ENCODE measurements at regions of chr6 and their contacts with region 1.

Region 1: GRCh38 chr6:31079656-31080261 is 32.6 kb downstream of the C6orf15 start:
- DNase-seq: peak; percentile 77
- H3K4me3 Mint-ChIP-seq: peak overlapping the region; percentile 43
- H3K27ac Mint-ChIP-seq: no peak overlapping the region
- H3K4me1 Mint-ChIP-seq: peaks cover 9% of the 10 kb centered on the region
- H3K27me3 Mint-ChIP-seq: peaks cover 2% of the 10 kb centered on the region

Region 2: DNA sequence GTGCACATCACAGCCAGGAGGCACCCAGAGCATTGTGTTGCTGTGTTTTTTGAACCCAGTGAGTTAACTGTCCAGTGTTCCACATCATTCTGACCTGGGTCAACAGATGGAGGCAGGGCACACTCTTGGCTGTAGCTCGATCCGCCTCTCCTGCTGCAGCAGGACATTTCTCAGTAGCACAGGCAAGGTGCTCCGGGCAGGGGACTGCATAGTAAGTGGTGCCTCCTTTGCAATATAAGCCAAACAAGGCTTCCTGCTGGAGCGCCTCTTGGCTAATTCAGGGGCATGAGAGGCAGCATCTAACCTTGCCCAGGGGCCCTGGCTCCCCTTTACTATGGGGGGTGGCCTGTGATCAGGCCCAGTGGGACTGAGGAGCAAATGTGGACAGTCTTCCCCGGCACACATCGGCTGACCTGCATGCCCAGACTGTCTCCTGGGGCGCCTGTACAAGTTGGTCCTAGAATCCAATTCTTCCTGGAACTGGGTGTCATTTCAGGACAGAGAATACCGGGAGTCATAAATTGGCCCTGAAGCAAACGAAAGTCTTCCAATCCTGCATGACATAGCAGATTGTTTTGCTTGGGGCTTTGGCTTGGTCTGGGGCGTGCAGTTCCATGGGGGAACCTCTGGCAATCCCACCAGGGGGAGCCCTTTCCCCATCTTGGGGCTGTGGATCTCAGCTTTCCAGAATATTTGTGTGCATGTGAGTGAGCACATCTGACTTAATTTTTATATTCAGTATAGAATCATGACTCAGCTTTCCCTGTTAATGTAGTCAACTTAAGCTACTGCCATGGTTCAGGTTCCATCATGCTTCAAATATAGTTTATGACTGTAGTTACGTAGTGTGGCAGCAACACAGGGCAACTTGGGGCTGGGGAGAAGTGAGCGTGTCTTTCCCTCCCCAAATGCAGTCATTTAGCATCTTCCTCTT is 251.5 kb before region 1 on chr6:
- CTCF ChIA-PET with region 1: interaction called, 46 read pairs
- POLR2A ChIA-PET with region 1: no interaction called
- intact Hi-C with region 1: no loop called
- DNase-seq: peak; percentile 90
- H3K4me3 Mint-ChIP-seq: peak overlapping the region; percentile 83
- H3K27ac Mint-ChIP-seq: peak overlapping the region; percentile 96
- H3K4me1 Mint-ChIP-seq: peaks cover 65% of the 10 kb centered on the region
- H3K27me3 Mint-ChIP-seq: no peaks in the 10 kb centered on the region

Region 3: GRCh38 chr6:30914076-30914853 is 165.5 kb before region 1 on chr6 and contains the start of gene VARS2:
- CTCF ChIA-PET with region 1: interaction called, 82 read pairs
- POLR2A ChIA-PET with region 1: interaction called, 7 read pairs
- intact Hi-C with region 1: loop called (anchors 1 kb)
- DNase-seq: peak; percentile 93
- H3K4me3 Mint-ChIP-seq: peak within 1 kb of the TSS; percentile 94
- H3K27ac Mint-ChIP-seq: peak within 1 kb of the TSS; percentile 82
- H3K4me1 Mint-ChIP-seq: peaks cover 29% of the 10 kb centered on the region
- H3K27me3 Mint-ChIP-seq: no peaks in the 10 kb centered on the region
- total RNA-seq, gene VARS2: 56.9 to 68.9 TPM

Region 4: GRCh38 chr6:31060145-31060544 is 19.6 kb before region 1 on chr6:
- CTCF ChIA-PET with region 1: interaction called, 17 read pairs
- POLR2A ChIA-PET with region 1: no interaction called
- intact Hi-C with region 1: no loop called
- DNase-seq: no peak
- H3K4me3 Mint-ChIP-seq: no peak overlapping the region
- H3K27ac Mint-ChIP-seq: no peak overlapping the region
- H3K4me1 Mint-ChIP-seq: peaks cover 9% of the 10 kb centered on the region
- H3K27me3 Mint-ChIP-seq: no peaks in the 10 kb centered on the region

Region 5: GRCh38 chr6:31094389-31094881 is 14.7 kb after region 1 on chr6:
- CTCF ChIA-PET with region 1: interaction called, 30 read pairs
- POLR2A ChIA-PET with region 1: no interaction called
- intact Hi-C with region 1: no loop called
- DNase-seq: peak; percentile 60
- H3K4me3 Mint-ChIP-seq: no peak overlapping the region
- H3K27ac Mint-ChIP-seq: peak overlapping the region; percentile 81
- H3K4me1 Mint-ChIP-seq: peaks cover 41% of the 10 kb centered on the region
- H3K27me3 Mint-ChIP-seq: no peaks in the 10 kb centered on the region

Region 6: DNA sequence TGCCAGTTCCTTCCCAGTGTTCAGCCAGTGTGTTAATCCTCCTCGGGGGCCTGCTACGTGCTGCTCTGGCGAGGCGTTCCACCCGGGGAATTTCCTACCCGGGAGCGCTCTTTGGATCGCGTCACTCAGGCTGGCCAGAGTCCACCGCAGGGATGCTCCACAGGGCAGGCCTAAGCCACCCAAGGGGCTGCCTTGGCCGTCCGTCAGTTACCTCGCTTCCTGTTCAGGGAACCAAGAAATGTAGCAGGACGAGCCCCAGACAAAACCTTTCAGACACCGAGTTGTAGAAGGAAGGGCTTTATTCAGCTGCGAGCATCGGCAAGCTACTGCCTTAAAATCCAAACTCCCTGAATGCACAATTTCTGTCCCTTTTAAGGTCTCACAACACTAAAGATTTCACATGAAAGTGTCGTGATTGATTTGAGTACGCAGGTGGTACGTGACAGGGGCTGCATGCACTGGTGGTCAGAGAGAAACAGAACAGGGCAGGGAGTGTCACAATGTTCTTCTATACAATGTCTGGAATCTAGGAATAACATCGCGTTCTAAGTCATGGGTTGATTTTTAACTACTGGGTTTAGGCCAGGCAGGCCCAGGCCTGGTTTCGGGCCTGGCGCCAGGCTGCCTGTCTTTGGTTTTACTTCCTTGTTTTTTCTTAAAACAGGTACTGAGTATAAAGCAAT is 106.4 kb after region 1 on chr6:
- CTCF ChIA-PET with region 1: no interaction called
- POLR2A ChIA-PET with region 1: no interaction called
- intact Hi-C with region 1: no loop called
- DNase-seq: no peak
- H3K4me3 Mint-ChIP-seq: no peak overlapping the region
- H3K27ac Mint-ChIP-seq: no peak overlapping the region
- H3K4me1 Mint-ChIP-seq: peaks cover 4% of the 10 kb centered on the region
- H3K27me3 Mint-ChIP-seq: no peaks in the 10 kb centered on the region

Region 7: GRCh38 chr6:31366693-31367470 is 287.1 kb after region 1 on chr6:
- CTCF ChIA-PET with region 1: no interaction called
- POLR2A ChIA-PET with region 1: no interaction called
- intact Hi-C with region 1: no loop called
- DNase-seq: peak; percentile 89
- H3K4me3 Mint-ChIP-seq: peak overlapping the region; percentile 75
- H3K27ac Mint-ChIP-seq: peak overlapping the region; percentile 25
- H3K4me1 Mint-ChIP-seq: peaks cover 23% of the 10 kb centered on the region
- H3K27me3 Mint-ChIP-seq: peaks cover 10% of the 10 kb centered on the region

Region 8: DNA sequence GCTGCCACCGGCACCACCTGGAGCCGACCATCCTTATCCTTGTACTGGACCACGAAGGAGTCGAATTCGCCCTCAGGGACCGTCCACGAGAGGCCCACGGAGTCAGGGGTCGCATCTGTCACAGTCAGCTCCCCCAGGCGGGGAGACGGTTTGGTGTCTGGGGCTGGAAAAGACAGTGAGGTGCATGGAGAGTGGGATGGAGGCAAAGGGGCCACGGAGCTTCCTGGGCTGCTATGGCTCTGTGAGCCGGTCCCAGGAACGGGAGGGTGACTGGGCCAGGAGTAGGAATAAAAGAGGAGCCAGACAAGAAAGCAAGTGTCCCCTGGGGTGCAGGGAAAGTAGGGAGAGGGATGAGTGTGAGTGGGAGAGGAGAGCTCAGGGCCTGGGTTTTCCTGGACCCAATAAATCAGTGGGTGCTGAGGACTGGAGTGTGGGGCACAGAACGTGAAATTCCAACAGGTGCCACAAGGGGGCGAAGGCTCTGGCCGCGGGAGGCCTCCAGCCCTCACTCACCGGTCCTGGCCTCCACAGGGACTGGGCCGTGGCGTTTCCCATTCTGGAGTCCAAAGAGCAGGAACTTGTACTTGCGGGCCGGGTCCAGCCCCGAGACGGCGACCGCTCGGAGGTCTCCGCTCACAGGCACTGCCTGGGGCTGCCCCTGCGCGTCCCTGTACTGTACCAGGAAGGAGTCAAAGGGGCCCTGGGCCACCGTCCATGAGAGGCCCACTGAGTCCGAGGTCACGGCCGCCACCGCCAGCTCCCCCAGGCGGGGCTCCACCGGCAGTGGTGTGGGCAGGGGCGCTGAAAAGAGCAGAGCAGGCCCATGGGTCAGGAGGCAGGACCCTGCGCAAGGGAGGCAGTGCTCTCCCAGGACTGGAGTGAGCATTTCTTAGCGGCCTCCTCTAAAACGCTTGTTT is 968.3 kb after region 1 on chr6:
- CTCF ChIA-PET with region 1: no interaction called
- POLR2A ChIA-PET with region 1: no interaction called
- intact Hi-C with region 1: no loop called
- DNase-seq: peak; percentile 73
- H3K4me3 Mint-ChIP-seq: no peak overlapping the region
- H3K27ac Mint-ChIP-seq: no peak overlapping the region
- H3K4me1 Mint-ChIP-seq: peaks cover 5% of the 10 kb centered on the region
- H3K27me3 Mint-ChIP-seq: no peaks in the 10 kb centered on the region

Measured in activated CD4-positive, alpha-beta memory T cell treated with anti-CD3 and anti-CD28 coated beads for 36 hours (primary cell).